MCF 10A (cell line): ENCODE measurements at regions of chr1 and their contacts with region 1.

Region 1: DNA sequence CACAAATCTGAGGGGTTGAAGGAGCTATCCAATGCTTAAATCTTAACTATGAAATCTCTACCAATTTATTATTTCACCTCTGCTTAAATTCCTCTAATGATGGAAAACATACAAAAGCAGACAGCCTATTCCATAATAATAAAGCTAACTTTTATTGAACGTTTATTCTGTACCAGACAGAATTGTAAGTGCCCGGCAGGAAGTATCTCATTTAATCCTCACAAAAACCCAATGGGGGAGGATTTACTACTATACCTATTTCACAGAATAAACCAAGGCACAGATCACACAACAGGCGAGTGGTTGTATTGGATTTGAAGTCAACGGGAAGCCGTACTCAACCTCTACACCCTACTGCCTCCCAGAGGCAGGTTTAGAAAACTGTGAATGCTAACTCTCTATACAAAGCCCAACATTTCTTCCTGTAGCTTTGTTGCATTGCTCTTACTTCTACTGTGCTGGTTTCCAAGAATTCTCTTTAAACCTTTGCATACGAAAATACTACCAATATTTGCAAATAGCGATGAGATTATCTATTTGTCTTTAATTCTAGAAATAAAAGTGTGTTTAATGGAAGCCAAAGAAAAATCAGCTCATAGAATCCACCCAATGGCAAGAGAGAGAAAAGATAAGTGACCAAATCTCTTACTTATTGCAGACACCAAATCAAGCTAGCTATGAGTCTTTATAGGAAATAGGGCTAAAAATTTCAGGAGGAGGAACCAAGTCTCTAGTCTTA is 33.5 kb upstream of the C1orf53 start:
- DNase-seq: peak; percentile 86
- H3K4me3 Mint-ChIP-seq: no peak overlapping the region
- H3K27ac Mint-ChIP-seq: no peak overlapping the region
- H3K4me1 Mint-ChIP-seq: no peaks in the 10 kb centered on the region
- H3K27me3 Mint-ChIP-seq: no peaks in the 10 kb centered on the region
- CTCF ChIP-seq: peak; percentile 88

Region 2: DNA sequence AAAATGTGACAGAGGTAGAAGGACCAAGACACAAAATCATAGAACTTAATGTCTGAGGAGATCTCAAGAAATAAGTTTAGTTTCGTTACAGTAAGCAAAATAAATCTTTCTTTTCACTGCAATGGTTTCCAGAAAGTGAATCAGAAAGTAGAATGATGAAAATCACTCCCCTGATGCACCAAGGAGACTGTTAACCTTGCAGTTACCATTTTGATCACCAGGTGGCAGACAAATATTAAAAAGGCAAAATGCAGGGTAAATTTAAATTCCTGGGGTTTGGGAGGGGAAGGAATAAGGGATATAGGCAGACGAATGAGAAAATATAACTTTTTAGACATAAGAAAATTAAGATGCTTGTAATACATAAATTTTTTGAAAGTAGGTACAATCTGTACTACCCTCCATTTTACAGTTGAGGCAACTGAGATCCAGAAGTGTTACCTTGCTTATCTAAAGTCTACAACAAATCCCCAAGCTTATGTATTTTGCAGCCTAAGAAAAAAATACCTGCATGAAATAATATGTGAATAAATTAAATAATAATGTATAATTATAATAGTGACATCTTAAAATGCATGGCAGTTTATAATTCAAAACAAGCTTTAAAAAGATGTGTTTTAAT is 347.7 kb before region 1 on chr1:
- CTCF ChIA-PET with region 1: interaction called, 22 read pairs
- POLR2A ChIA-PET with region 1: no interaction called
- intact Hi-C with region 1: loop called (anchors 1 kb)
- DNase-seq: peak; percentile 67
- H3K4me3 Mint-ChIP-seq: no peak overlapping the region
- H3K27ac Mint-ChIP-seq: no peak overlapping the region
- H3K4me1 Mint-ChIP-seq: peaks cover 5% of the 10 kb centered on the region
- H3K27me3 Mint-ChIP-seq: no peaks in the 10 kb centered on the region
- CTCF ChIP-seq: peak; percentile 88

Region 3: DNA sequence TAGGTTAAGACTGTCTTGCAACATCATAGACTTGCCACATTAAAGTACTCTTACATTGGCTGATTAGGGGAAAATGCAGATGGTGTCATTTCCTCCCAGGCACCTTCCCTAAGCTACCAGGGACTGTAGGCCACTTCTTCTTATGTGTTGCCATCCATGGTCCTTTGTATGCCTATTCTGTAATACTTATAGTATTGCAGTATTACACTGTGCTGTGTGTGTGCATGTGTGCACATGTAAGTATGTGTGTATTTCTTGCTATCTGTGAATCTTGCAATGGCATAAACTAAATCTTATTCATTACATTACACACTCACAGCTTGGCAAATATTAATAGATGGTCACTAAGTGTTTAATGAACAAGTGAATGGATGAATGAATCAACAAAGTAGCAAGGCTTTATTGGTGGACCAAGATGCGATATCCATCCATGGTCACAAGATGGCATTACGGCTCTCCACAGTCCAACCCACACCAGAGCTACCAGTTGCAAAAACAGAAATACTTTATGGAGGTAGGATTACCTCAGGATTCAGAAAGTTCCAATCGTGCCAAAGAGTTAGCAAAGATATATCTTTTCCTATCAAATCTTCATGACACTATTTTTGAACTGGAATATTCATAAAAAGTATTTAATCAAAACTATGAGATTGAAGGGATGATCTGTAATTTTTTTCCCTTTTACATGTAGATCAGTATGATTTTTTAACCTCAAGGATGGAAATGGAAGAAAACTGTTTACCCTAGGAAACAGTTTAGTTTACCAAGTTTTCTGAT is 253.8 kb before region 1 on chr1:
- CTCF ChIA-PET with region 1: interaction called, 125 read pairs
- POLR2A ChIA-PET with region 1: interaction called, 4 read pairs
- intact Hi-C with region 1: loop called (anchors 1 kb)
- DNase-seq: peak; percentile 67
- H3K4me3 Mint-ChIP-seq: no peak overlapping the region
- H3K27ac Mint-ChIP-seq: no peak overlapping the region
- H3K4me1 Mint-ChIP-seq: no peaks in the 10 kb centered on the region
- H3K27me3 Mint-ChIP-seq: no peaks in the 10 kb centered on the region
- CTCF ChIP-seq: peak; percentile 82

Region 4: GRCh38 chr1:197706601-197707000 is 162.3 kb before region 1 on chr1:
- CTCF ChIA-PET with region 1: interaction called, 25 read pairs
- POLR2A ChIA-PET with region 1: interaction called, 3 read pairs
- intact Hi-C with region 1: no loop called
- DNase-seq: no peak
- H3K4me3 Mint-ChIP-seq: no peak overlapping the region
- H3K27ac Mint-ChIP-seq: no peak overlapping the region
- H3K4me1 Mint-ChIP-seq: no peaks in the 10 kb centered on the region
- H3K27me3 Mint-ChIP-seq: no peaks in the 10 kb centered on the region
- CTCF ChIP-seq: no peak

Region 5: GRCh38 chr1:197814306-197814705 is 54.6 kb before region 1 on chr1:
- CTCF ChIA-PET with region 1: interaction called, 11 read pairs
- POLR2A ChIA-PET with region 1: no interaction called
- intact Hi-C with region 1: no loop called
- DNase-seq: no peak
- H3K4me3 Mint-ChIP-seq: no peak overlapping the region
- H3K27ac Mint-ChIP-seq: no peak overlapping the region
- H3K4me1 Mint-ChIP-seq: no peaks in the 10 kb centered on the region
- H3K27me3 Mint-ChIP-seq: no peaks in the 10 kb centered on the region
- CTCF ChIP-seq: no peak

Region 6: GRCh38 chr1:197890936-197891335 is 22.0 kb after region 1 on chr1:
- CTCF ChIA-PET with region 1: interaction called, 12 read pairs
- POLR2A ChIA-PET with region 1: no interaction called
- intact Hi-C with region 1: no loop called
- DNase-seq: no peak
- H3K4me3 Mint-ChIP-seq: no peak overlapping the region
- H3K27ac Mint-ChIP-seq: no peak overlapping the region
- H3K4me1 Mint-ChIP-seq: no peaks in the 10 kb centered on the region
- H3K27me3 Mint-ChIP-seq: no peaks in the 10 kb centered on the region
- CTCF ChIP-seq: no peak

Region 7: DNA sequence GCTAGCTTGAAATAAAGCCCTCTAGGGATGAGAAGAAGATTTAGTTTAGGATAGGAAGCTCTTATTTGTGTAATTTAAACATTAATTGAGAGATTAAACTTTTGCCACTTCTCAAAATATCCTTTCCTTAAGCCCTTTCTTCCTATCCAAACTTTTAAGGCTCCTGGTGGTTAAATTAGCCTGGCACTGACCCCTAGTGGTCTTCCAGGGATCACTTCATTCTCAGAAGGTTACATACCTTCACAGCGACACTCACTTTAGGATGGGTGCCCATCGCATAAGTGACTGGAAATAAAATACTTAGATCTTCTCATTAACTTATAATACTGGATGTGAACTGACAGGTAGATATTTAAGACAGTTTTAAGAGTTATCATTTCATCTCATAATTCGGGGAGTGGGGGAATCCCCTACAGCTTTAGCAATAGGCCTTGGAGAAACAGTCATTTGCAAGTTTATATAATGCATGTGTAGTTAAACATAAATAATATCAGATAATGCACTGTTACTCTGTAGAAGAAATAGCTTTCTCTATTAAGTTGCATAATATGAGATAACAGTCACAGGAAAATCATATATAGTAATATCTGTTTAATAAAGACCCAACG is 55.7 kb after region 1 on chr1:
- CTCF ChIA-PET with region 1: interaction called, 9 read pairs
- POLR2A ChIA-PET with region 1: no interaction called
- intact Hi-C with region 1: loop called (anchors 2 kb)
- DNase-seq: peak; percentile 84
- H3K4me3 Mint-ChIP-seq: no peak overlapping the region
- H3K27ac Mint-ChIP-seq: no peak overlapping the region
- H3K4me1 Mint-ChIP-seq: peaks cover 5% of the 10 kb centered on the region
- H3K27me3 Mint-ChIP-seq: no peaks in the 10 kb centered on the region
- CTCF ChIP-seq: peak; percentile 84